ENCODE measurements at regions of chr12 and their contacts with region 1.

Region 1: DNA sequence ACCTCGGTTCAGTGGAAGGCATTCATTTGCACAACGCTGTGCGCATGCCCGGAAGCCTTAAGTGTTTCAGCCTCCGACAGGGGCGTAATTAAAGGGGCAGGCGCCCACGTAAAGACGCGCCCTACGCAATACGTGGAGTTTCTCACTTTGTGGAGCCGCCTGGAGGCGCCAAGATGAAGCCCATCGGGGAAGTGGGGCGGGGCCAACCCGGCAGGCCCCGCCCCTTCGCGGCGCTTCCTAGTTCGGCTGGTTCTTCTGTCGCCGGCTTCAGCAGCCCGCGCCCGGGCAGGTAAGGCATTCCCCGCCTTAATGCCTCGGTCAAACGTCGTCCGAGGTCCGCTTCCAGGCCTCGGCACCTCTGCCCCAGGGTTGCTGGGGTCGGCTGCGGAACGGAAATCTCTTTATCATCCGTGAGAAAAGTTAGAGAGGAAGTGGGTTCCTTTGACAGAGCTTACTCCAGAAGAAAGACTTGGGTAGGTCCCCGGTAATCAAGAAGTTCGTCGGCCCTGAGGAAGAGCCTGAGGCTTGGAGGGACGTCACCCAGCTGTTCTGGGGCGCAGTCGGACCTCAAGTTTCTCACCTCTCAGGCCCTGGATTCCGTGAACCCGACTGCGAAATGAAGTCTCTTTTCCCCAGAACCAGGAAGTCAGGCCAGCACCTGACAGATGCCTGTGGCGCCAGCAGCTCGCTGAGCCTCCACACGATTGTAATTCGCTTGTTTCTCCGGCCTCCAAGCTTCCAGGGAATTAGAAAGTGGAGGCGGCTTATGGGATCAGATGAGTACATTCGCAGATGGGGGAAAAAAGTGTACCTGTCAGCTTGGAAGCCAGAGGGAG is at the starts of genes IRAK4 and PUS7L:
- DNase-seq: peak; percentile 97
- ATAC-seq: peak; percentile 94
- H3K4me3 Mint-ChIP-seq: peak within 1 kb of the TSS; percentile 95
- H3K27ac Mint-ChIP-seq: peak within 1 kb of the TSS; percentile 99
- H3K4me1 Mint-ChIP-seq: peaks cover 66% of the 10 kb centered on the region
- H3K27me3 Mint-ChIP-seq: no peaks in the 10 kb centered on the region
- total RNA-seq, gene IRAK4: 26.8 to 31.1 TPM
- total RNA-seq, gene PUS7L: 13.2 to 20.2 TPM

Region 2: DNA sequence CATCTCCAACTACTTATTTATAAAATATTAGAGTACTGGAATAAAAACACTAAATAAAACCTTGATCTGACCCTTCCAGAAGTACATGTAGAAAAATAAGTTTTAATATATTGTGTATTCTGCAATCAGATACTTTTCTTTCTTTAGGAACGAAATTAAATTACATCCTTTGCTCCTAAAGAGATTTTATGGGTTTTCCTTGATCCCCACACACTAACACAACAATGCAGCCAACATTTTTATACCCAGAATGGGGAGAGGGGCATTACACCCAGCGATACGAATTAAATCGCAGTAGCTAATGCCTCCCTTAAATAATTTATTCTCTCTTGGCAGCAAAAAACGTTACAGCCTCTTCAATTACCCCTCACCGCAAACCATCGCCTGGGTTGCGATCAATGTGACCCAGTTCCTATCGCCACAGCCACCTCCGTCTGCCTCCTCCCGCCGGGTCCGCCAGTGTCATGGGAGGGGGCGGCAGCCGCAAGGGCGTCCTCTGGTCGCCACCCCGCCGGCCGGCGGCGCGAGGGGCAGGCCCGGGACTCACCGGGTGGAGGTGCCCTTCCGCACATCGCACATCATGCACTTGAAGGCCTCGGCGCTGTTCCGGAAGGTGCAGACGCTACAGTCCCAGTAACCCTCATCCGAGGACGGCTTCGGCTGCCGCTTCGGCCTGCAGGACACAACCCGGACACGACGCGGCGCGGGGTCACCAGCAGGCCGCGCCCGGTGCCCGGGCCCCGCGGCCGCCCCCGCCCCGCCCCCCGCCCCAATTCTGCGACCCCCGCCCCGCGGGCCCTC is 1521.7 kb before region 1 on chr12:
- CTCF ChIA-PET with region 1: no interaction called
- POLR2A ChIA-PET with region 1: no interaction called
- intact Hi-C with region 1: loop called in 1 of 2 experiments (anchors 2 kb)
- DNase-seq: peak; percentile 85
- ATAC-seq: peak; percentile 85
- H3K4me3 Mint-ChIP-seq: peak overlapping the region; percentile 86
- H3K27ac Mint-ChIP-seq: peak overlapping the region; percentile 90
- H3K4me1 Mint-ChIP-seq: peaks cover 40% of the 10 kb centered on the region
- H3K27me3 Mint-ChIP-seq: no peaks in the 10 kb centered on the region

Region 3: GRCh38 chr12:42482445-42483237 is 1276.3 kb before region 1 on chr12:
- CTCF ChIA-PET with region 1: no interaction called
- POLR2A ChIA-PET with region 1: no interaction called
- intact Hi-C with region 1: loop called in 1 of 2 experiments (anchors 10 kb)
- DNase-seq: peak; percentile 75
- ATAC-seq: peak; percentile 78
- H3K4me3 Mint-ChIP-seq: peak overlapping the region; percentile 66
- H3K27ac Mint-ChIP-seq: no peak overlapping the region
- H3K4me1 Mint-ChIP-seq: peaks cover 9% of the 10 kb centered on the region
- H3K27me3 Mint-ChIP-seq: peaks cover 71% of the 10 kb centered on the region

Region 4: GRCh38 chr12:43728117-43728516 is 30.8 kb before region 1 on chr12:
- CTCF ChIA-PET with region 1: interaction called, 3 read pairs
- POLR2A ChIA-PET with region 1: interaction called, 3 read pairs
- intact Hi-C with region 1: loop called in 1 of 2 experiments (anchors 1 kb)
- DNase-seq: no peak
- ATAC-seq: no peak
- H3K4me3 Mint-ChIP-seq: no peak overlapping the region
- H3K27ac Mint-ChIP-seq: no peak overlapping the region
- H3K4me1 Mint-ChIP-seq: peaks cover 14% of the 10 kb centered on the region
- H3K27me3 Mint-ChIP-seq: no peaks in the 10 kb centered on the region

Region 5: GRCh38 chr12:43805860-43806736 is 47.2 kb after region 1 on chr12 and contains the start of gene TWF1:
- CTCF ChIA-PET with region 1: interaction called, 4 read pairs
- POLR2A ChIA-PET with region 1: interaction called, 7 read pairs
- intact Hi-C with region 1: loop called (anchors 1 kb)
- DNase-seq: peak; percentile 93
- ATAC-seq: peak; percentile 94
- H3K4me3 Mint-ChIP-seq: peak within 1 kb of the TSS; percentile 88
- H3K27ac Mint-ChIP-seq: peak within 1 kb of the TSS; percentile 100
- H3K4me1 Mint-ChIP-seq: peaks cover 28% of the 10 kb centered on the region
- H3K27me3 Mint-ChIP-seq: no peaks in the 10 kb centered on the region
- total RNA-seq, gene TWF1: 15.5 to 17.4 TPM

Region 6: DNA sequence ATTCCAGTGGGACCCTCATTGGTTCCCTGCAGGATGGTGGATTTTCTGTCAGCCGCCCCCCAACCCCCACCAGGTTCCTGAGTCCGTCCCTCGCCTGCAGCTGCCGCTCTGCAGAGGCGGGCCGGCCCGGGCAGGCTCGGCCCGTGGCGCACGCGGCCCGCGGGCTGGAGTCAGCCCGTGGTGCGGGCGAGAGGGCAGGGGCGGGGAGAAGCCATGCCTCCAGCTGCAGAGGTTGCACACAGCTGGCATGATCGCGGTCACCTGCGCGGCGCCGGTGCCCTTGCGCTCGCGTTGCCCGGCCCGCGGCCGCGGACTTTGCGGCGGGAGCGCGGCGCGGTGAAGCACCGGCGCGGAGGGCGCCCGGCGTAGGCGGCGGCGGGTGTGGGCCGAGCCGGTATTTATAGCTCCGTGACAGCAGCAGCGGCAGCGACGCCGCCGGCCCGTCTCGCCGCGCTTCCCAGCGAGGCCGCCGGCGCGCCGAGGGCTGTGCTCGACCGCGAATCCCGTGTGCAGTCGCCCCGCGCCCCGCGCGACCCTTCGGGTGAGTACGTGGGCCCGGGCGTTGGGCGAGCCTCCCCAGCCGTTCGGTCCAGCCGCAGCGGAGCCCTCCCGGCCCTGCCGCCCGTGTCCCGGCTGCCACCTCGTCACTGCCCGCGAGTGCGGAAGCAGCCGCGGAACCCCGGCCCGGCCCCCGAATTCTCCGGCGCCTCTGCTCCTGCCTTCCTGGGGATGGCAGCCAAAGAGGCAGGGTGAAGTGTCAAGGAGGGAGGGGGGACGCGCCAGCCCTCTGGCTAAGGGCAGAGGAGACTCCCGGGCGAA is 76.9 kb after region 1 on chr12 and contains the start of gene TMEM117:
- CTCF ChIA-PET with region 1: no interaction called
- POLR2A ChIA-PET with region 1: no interaction called
- intact Hi-C with region 1: loop called in 1 of 2 experiments (anchors 1 kb)
- DNase-seq: peak; percentile 69
- ATAC-seq: peak; percentile 63
- H3K4me3 Mint-ChIP-seq: peak within 1 kb of the TSS; percentile 80
- H3K27ac Mint-ChIP-seq: peak within 1 kb of the TSS; percentile 83
- H3K4me1 Mint-ChIP-seq: peaks cover 45% of the 10 kb centered on the region
- H3K27me3 Mint-ChIP-seq: no peaks in the 10 kb centered on the region
- total RNA-seq, gene TMEM117: 1.4 TPM

Region 7: GRCh38 chr12:43882578-43883178 is 123.7 kb after region 1 on chr12:
- CTCF ChIA-PET with region 1: interaction called, 8 read pairs
- POLR2A ChIA-PET with region 1: no interaction called
- intact Hi-C with region 1: loop called in 1 of 2 experiments (anchors 1 kb)
- DNase-seq: peak; percentile 27
- ATAC-seq: peak; percentile 65
- H3K4me3 Mint-ChIP-seq: no peak overlapping the region
- H3K27ac Mint-ChIP-seq: no peak overlapping the region
- H3K4me1 Mint-ChIP-seq: no peaks in the 10 kb centered on the region
- H3K27me3 Mint-ChIP-seq: no peaks in the 10 kb centered on the region

Region 8: GRCh38 chr12:43976027-43976426 is 217.1 kb after region 1 on chr12:
- CTCF ChIA-PET with region 1: no interaction called
- POLR2A ChIA-PET with region 1: no interaction called
- intact Hi-C with region 1: no loop called
- DNase-seq: no peak
- ATAC-seq: no peak
- H3K4me3 Mint-ChIP-seq: no peak overlapping the region
- H3K27ac Mint-ChIP-seq: no peak overlapping the region
- H3K4me1 Mint-ChIP-seq: no peaks in the 10 kb centered on the region
- H3K27me3 Mint-ChIP-seq: no peaks in the 10 kb centered on the region

Measured in activated CD4-positive, alpha-beta T cell treated with anti-CD3 and anti-CD28 coated beads for 36 hours (primary cell).